Psoas muscle (tissue), 8 donors: ENCODE measurements at regions of chrX and their contacts with region 1.

Region 1: GRCh38 chrX:150805736-150806135 is 92.7 kb downstream of the CD99L2 start:
- DNase-seq: no peak
- ATAC-seq: no peak
- H3K4me3 ChIP-seq: no peak overlapping the region
- H3K27ac ChIP-seq: no peak overlapping the region
- H3K4me1 ChIP-seq: no peaks in the 10 kb centered on the region
- H3K27me3 ChIP-seq: no peaks in the 10 kb centered on the region
- CTCF ChIP-seq: no peak

Region 2: DNA sequence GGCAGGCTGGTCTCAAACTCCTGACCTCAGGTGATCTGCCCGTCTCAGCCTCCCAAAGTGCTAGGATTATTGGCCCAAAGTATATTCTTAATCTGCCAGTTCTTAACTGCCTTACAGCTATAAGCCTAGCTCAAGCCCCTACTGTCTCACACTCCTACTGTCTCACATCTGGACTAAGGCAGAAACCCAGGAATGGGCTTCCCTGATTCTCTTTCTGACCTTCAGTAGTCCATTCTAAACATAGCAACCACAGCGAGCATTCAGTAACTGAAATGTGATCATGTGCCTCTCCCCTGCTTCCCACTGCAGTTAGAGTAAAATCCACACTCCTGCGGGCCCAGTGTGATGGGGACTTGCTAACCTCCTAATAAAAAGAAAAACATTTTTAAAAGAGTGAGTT is 53.6 kb before region 1 on chrX:
- intact Hi-C with region 1: no loop called
- DNase-seq: no peak
- ATAC-seq: peak in 3 of 4 donors; percentile 37 to 72 (median 45)
- H3K4me3 ChIP-seq: no peak overlapping the region
- H3K27ac ChIP-seq: no peak overlapping the region
- H3K4me1 ChIP-seq: no peaks in the 10 kb centered on the region
- H3K27me3 ChIP-seq: no peaks in the 10 kb centered on the region
- CTCF ChIP-seq: no peak

Region 3: DNA sequence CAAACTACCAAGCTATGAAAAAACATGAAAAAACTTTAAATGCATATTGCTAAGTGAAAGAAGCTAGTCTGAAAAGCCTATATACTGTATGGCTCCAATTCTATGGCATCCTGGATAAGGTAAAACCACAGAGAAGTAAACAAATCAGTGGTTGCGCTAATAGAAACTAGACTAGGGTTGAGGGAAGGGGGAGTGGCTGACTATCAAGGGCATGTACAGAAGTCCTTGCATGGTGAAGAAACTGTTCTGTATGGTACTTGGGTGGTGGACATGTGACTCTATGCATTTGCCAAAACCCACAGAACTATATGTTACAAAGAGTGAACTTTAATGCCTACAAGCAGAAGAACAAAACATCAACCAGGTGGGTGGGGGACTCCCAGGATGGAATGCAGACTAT is 15.7 kb before region 1 on chrX:
- intact Hi-C with region 1: loop called in 1 of 2 experiments (anchors 2 kb)
- DNase-seq: no peak
- ATAC-seq: no peak
- H3K4me3 ChIP-seq: no peak overlapping the region
- H3K27ac ChIP-seq: no peak overlapping the region
- H3K4me1 ChIP-seq: no peaks in the 10 kb centered on the region
- H3K27me3 ChIP-seq: no peaks in the 10 kb centered on the region
- CTCF ChIP-seq: no peak